CD4-positive, alpha-beta memory T cell (primary cell): ENCODE measurements at regions of chr4 and their contacts with region 1.

Region 1: DNA sequence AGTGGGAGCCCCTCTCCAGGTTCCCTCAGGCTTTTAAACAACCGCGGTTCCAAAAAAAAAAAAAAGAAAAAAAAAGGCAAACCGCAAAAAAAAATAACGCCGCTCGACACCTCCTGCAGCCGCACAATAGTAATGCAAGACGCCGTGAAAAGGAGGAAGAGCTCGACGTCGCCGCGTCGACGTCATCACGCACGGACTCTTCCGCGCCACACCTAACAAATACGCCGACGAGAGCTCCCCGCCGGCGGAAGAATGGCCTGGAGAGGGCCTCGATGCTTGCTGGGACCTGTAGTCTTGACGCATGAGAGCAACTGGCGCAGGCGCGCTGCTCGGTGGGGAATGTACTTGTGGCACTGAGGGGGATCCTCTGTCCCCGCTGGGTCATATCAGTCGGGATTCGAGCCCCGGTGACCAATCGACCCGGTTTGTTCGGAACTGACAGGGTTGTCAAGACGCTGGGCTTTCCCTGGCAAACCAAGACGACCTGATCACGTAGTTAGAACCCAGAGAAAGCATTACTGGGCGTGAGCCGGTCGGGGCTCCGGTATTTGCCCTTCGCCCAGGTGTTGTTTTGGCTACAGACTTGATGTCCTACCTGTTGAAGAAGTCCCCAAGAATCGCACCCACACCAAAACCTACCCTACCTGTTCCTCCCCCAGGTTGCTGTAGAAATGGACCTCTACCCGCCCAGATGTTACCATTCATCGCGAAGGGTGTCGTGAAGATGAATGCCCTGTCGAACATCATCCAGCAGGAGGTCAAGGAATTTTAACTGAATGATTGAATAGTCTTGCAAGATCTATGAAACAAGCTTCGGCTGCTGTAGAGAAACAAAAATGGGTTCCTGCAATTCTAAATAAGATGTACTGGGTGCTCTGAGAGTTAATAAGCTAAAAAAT is at the start of gene CBR4:
- DNase-seq: peak; percentile 92 to 98 (median 97)
- H3K4me3 ChIP-seq: peak within 1 kb of the TSS; percentile 84
- H3K4me3 Mint-ChIP-seq: peak within 1 kb of the TSS; percentile 91 to 99 (median 94)
- H3K27ac ChIP-seq: peak within 1 kb of the TSS; percentile 94
- H3K27ac Mint-ChIP-seq: peak within 1 kb of the TSS; percentile 96 to 100 (median 98)
- H3K4me1 ChIP-seq: peaks cover 35% of the 10 kb centered on the region
- H3K4me1 Mint-ChIP-seq: peaks cover 22 to 42% (median 27%) of the 10 kb centered on the region in 4 donors
- H3K27me3 ChIP-seq: no peaks in the 10 kb centered on the region
- H3K27me3 Mint-ChIP-seq: peaks cover 2 to 3% of the 10 kb centered on the region in 2 donors
- total RNA-seq, gene CBR4: 19.9 to 20.0 TPM

Region 2: GRCh38 chr4:168480931-168481611 is 529.3 kb before region 1 on chr4:
- CTCF ChIA-PET with region 1: interaction called, 9 read pairs
- POLR2A ChIA-PET with region 1: interaction called, 9 read pairs
- intact Hi-C with region 1: loop called (anchors 2 kb)
- DNase-seq: peak; percentile 74 to 82 (median 81)
- H3K4me3 ChIP-seq: peak overlapping the region; percentile 65 to 74
- H3K4me3 Mint-ChIP-seq: peak overlapping the region; percentile 98 to 100 (median 100)
- H3K27ac ChIP-seq: peak overlapping the region; percentile 93
- H3K27ac Mint-ChIP-seq: peak overlapping the region; percentile 97 to 99 (median 99)
- H3K4me1 ChIP-seq: peaks cover 54% of the 10 kb centered on the region
- H3K4me1 Mint-ChIP-seq: peaks cover 48 to 79% (median 66%) of the 10 kb centered on the region in 4 donors
- H3K27me3 ChIP-seq: no peaks in the 10 kb centered on the region
- H3K27me3 Mint-ChIP-seq: no peaks in the 10 kb centered on the region

Region 3: DNA sequence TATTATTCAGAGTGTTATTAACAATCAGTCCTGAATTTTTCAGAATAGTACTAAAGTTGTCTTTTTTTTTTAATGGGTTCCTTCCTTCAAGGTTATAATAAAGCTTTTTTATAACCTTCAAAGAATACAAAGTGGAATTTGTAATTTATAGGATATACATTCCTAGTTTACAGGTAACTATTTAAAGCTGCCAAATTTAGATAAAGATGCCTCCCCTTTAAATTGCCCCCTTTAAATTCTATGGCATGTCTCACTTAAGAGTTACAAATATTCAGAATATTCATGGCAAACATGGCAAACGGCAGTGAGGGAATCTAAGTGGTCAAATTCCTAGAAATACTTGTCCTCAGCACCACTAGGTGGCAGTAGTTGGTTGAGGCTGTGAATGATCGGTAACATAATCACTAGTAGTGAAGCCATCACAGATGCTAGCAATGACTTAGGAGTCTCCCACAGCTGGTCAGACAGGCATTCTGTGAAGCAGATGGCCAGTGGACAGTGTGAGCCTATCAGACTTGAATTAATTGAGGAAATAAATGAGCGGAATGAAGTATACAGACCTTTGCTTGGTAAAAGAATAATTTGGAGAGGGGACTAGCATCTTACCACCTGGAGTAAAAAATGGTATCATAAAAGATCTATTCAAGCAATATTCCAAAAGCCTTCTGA is 86.7 kb before region 1 on chr4:
- CTCF ChIA-PET with region 1: interaction called, 20 read pairs
- POLR2A ChIA-PET with region 1: no interaction called
- intact Hi-C with region 1: loop called (anchors 1 kb)
- DNase-seq: peak; percentile 42 to 53 (median 48)
- H3K4me3 ChIP-seq: no peak overlapping the region
- H3K4me3 Mint-ChIP-seq: no peak overlapping the region
- H3K27ac ChIP-seq: no peak overlapping the region
- H3K27ac Mint-ChIP-seq: no peak overlapping the region
- H3K4me1 ChIP-seq: no peaks in the 10 kb centered on the region
- H3K4me1 Mint-ChIP-seq: peaks cover 0 to 3% (median 0%) of the 10 kb centered on the region in 4 donors
- H3K27me3 ChIP-seq: no peaks in the 10 kb centered on the region
- H3K27me3 Mint-ChIP-seq: no peaks in the 10 kb centered on the region

Region 4: GRCh38 chr4:169485791-169486742 is 475.7 kb after region 1 on chr4:
- CTCF ChIA-PET with region 1: no interaction called
- POLR2A ChIA-PET with region 1: no interaction called
- intact Hi-C with region 1: loop called (anchors 5 kb)
- DNase-seq: peak in 4 of 5 donors; percentile 10 to 37 (median 17)
- H3K4me3 ChIP-seq: no peak overlapping the region
- H3K4me3 Mint-ChIP-seq: no peak overlapping the region
- H3K27ac ChIP-seq: no peak overlapping the region
- H3K27ac Mint-ChIP-seq: no peak overlapping the region
- H3K4me1 ChIP-seq: no peaks in the 10 kb centered on the region
- H3K4me1 Mint-ChIP-seq: peaks cover 0 to 3% (median 0%) of the 10 kb centered on the region in 4 donors
- H3K27me3 ChIP-seq: no peaks in the 10 kb centered on the region
- H3K27me3 Mint-ChIP-seq: no peaks in the 10 kb centered on the region

Region 5: GRCh38 chr4:169619959-169620879 is 609.8 kb after region 1 on chr4 and contains the start of gene CLCN3:
- CTCF ChIA-PET with region 1: no interaction called
- POLR2A ChIA-PET with region 1: interaction called, 12 read pairs
- intact Hi-C with region 1: no loop called
- DNase-seq: peak; percentile 80 to 91 (median 83)
- H3K4me3 ChIP-seq: peak within 1 kb of the TSS; percentile 94 to 97
- H3K4me3 Mint-ChIP-seq: peak within 1 kb of the TSS; percentile 88 to 100 (median 96)
- H3K27ac ChIP-seq: peak within 1 kb of the TSS; percentile 87
- H3K27ac Mint-ChIP-seq: peak within 1 kb of the TSS; percentile 94 to 100 (median 99)
- H3K4me1 ChIP-seq: peaks cover 38% of the 10 kb centered on the region
- H3K4me1 Mint-ChIP-seq: peaks cover 36 to 72% (median 52%) of the 10 kb centered on the region in 4 donors
- H3K27me3 ChIP-seq: no peaks in the 10 kb centered on the region
- H3K27me3 Mint-ChIP-seq: no peaks in the 10 kb centered on the region
- total RNA-seq, gene CLCN3: 37.5 to 37.7 TPM

Region 6: GRCh38 chr4:170027181-170027829 is 1016.9 kb after region 1 on chr4:
- CTCF ChIA-PET with region 1: no interaction called
- POLR2A ChIA-PET with region 1: interaction called, 7 read pairs
- intact Hi-C with region 1: loop called (anchors 1 kb)
- DNase-seq: peak; percentile 88 to 93 (median 92)
- H3K4me3 ChIP-seq: peak overlapping the region; percentile 70 to 93
- H3K4me3 Mint-ChIP-seq: peak overlapping the region; percentile 85 to 94 (median 92)
- H3K27ac ChIP-seq: peak overlapping the region; percentile 18
- H3K27ac Mint-ChIP-seq: peak overlapping the region; percentile 82 to 95 (median 88)
- H3K4me1 ChIP-seq: peaks cover 12% of the 10 kb centered on the region
- H3K4me1 Mint-ChIP-seq: peaks cover 5 to 15% (median 8%) of the 10 kb centered on the region in 4 donors
- H3K27me3 ChIP-seq: no peaks in the 10 kb centered on the region
- H3K27me3 Mint-ChIP-seq: peaks cover 2 to 7% of the 10 kb centered on the region in 2 donors

Region 7: DNA sequence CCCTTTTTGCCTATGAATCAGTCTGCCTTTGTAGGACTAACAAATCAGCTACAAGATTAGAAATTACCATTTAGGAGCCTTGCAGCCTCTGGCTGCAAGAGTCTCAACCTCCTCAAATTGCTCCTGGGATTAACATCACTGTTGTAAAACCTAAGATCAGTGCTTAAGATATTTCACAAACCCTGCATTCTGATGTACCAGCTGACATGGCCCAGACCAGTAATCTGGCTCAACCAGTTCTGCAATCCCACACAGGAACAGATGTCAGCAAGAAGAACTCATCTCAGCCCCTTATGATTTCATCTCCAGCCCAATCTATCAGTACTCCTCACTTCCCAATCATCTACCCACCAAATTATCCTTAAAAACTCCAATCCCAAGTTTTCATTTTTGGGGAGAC is 1111.9 kb after region 1 on chr4:
- CTCF ChIA-PET with region 1: no interaction called
- POLR2A ChIA-PET with region 1: no interaction called
- intact Hi-C with region 1: no loop called
- DNase-seq: no peak
- H3K4me3 ChIP-seq: no peak overlapping the region
- H3K4me3 Mint-ChIP-seq: no peak overlapping the region
- H3K27ac ChIP-seq: no peak overlapping the region
- H3K27ac Mint-ChIP-seq: no peak overlapping the region
- H3K4me1 ChIP-seq: no peaks in the 10 kb centered on the region
- H3K4me1 Mint-ChIP-seq: no peaks in the 10 kb centered on the region
- H3K27me3 ChIP-seq: no peaks in the 10 kb centered on the region
- H3K27me3 Mint-ChIP-seq: peaks cover 3 to 5% of the 10 kb centered on the region in 2 donors